Panc1 (cell line): ENCODE measurements at regions of chr3 and their contacts with region 1.

Region 1: DNA sequence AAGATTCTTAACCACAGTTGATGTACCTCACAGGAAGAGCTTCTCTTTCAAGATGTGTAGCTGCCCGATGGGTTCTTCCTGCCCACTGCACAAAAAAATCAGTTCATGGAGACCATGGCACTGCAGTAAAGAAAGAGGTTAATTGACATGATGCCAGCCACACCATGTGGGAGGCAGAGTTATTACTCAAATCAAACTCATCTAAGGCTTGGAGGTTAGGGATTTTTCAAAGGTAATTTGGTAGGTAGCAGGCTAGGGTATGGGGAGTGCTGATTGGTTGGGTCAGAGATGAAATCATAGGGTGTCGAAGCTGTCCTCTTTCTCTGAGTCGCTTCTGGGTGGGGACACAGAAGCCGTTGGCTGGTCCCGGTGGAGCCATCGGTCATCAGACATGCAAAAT is 57.4 kb upstream of the BDH1 start:
- DNase-seq: no peak
- ATAC-seq: 0 out of 2 replicates have a peak, but pooled peaks have one; percentile 26
- H3K4me3 ChIP-seq: no peak overlapping the region
- H3K27ac ChIP-seq: no peak overlapping the region
- H3K4me1 ChIP-seq: no peaks in the 10 kb centered on the region
- H3K27me3 ChIP-seq: no peaks in the 10 kb centered on the region
- CTCF ChIP-seq: no peak

Region 2: GRCh38 chr3:197674741-197675562 is 61.8 kb after region 1 on chr3:
- CTCF ChIA-PET with region 1: no interaction called
- POLR2A ChIA-PET with region 1: no interaction called
- in situ Hi-C with region 1: loop called (anchors 10 kb)
- intact Hi-C with region 1: no loop called
- DNase-seq: no peak
- ATAC-seq: no peak
- H3K4me3 ChIP-seq: no peak overlapping the region
- H3K27ac ChIP-seq: no peak overlapping the region
- H3K4me1 ChIP-seq: no peaks in the 10 kb centered on the region
- H3K27me3 ChIP-seq: no peaks in the 10 kb centered on the region
- CTCF ChIP-seq: no peak

Region 3: GRCh38 chr3:197711973-197712707 is 98.9 kb after region 1 on chr3:
- CTCF ChIA-PET with region 1: no interaction called
- POLR2A ChIA-PET with region 1: interaction called, 15 read pairs
- in situ Hi-C with region 1: no loop called
- intact Hi-C with region 1: no loop called
- DNase-seq: peak; percentile 93
- ATAC-seq: peak; percentile 98
- H3K4me3 ChIP-seq: peak overlapping the region; percentile 28 to 62
- H3K27ac ChIP-seq: peak overlapping the region; percentile 88
- H3K4me1 ChIP-seq: peaks cover 18% of the 10 kb centered on the region
- H3K27me3 ChIP-seq: no peaks in the 10 kb centered on the region
- CTCF ChIP-seq: no peak